Stomach (tissue), 19 donors: ENCODE measurements at regions of chr11 and their contacts with region 1.

Region 1: DNA sequence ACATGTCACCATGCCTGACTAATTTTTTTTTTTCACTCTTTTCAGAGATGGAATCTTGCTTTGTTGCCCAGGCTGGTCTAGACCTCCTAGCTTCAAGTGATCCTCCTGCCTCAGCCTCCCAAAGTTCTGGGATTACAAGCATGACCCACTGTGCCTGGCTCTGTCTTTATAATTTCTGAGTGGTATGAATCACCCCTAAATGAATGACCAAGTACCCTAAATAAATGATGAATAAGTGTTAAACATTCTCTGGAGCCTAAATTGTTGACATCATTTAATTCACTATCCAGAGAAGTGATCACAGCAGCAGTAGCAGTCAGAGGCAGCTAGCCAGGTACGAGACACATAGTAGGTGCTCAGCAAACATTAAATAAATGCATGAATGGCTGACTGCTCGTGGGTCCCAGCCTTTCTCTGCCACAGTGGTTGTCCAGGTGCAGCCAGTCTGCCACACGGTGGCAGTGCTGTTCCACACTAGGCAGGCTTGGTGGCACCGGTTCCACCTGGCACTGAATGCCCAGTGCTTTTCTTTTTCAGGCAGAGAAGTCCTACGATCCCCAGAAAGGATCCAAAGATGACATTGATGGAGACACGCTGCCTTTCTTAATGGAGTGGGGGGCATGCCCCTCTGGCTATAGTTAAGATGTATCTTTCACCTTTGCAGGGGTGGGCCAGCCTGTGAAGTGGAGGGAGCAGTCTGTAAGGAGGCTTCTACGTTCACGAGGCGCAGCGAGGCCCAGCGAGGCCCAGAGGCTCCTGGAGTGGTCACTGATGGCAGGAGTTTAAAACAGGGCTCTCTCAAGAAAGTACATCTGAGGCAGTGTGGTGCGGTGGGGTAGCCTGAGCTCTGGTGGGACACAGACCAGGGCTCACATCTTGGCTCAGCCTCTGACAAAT is 8.7 kb upstream of the TTC12 start:
- DNase-seq: peak; percentile 83 to 90
- H3K4me3 ChIP-seq: no peak overlapping the region
- H3K27ac ChIP-seq: no peak overlapping the region
- H3K4me1 ChIP-seq: peaks cover 0 to 4% (median 0%) of the 10 kb centered on the region in 4 donors
- H3K27me3 ChIP-seq: no peaks in the 10 kb centered on the region
- CTCF ChIP-seq: peak in 5 of 7 experiments; percentile 79 to 88 (median 85)
- EP300 ChIP-seq: no peak
- POLR2A ChIP-seq: no peak

Region 2: GRCh38 chr11:113532697-113533424 is 227.2 kb after region 1 on chr11:
- intact Hi-C with region 1: loop called (anchors 5 kb)
- DNase-seq: peak; percentile 82 to 90
- H3K4me3 ChIP-seq: no peak overlapping the region
- H3K27ac ChIP-seq: no peak overlapping the region
- H3K4me1 ChIP-seq: no peaks in the 10 kb centered on the region
- H3K27me3 ChIP-seq: peaks cover 0 to 20% (median 0%) of the 10 kb centered on the region in 3 donors
- CTCF ChIP-seq: peak in 5 of 7 experiments; percentile 52 to 82 (median 75)
- EP300 ChIP-seq: no peak
- POLR2A ChIP-seq: no peak

Region 3: GRCh38 chr11:113730887-113731726 is 425.4 kb after region 1 on chr11:
- intact Hi-C with region 1: loop called (anchors 5 kb)
- DNase-seq: peak; percentile 45 to 84
- H3K4me3 ChIP-seq: no peak overlapping the region
- H3K27ac ChIP-seq: no peak overlapping the region
- H3K4me1 ChIP-seq: peaks cover 0 to 3% (median 0%) of the 10 kb centered on the region in 4 donors
- H3K27me3 ChIP-seq: no peaks in the 10 kb centered on the region
- CTCF ChIP-seq: peak in 3 of 7 experiments; percentile 13 to 45 (median 23)
- EP300 ChIP-seq: no peak
- POLR2A ChIP-seq: no peak